ENCODE measurements at regions of chr17 and their contacts with region 1.

Region 1: DNA sequence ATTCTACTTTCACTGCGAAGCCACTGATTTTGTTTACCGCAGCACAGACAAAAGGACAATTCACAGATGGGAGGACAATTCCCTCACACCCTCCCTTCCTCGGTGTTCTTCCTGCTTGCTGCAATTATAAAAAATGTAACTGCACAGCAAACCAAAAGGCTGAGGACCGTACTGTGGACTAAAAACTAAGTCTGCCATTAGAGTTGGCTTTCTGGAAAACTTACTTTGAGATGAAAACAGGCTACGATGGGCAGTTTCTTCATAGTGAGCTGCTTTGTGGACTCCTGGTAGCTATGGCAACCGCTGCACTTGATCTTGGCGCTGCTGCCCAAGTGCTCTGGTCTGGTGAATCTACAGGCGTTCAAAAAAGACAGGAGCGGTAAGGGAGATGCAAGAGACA is 35.2 kb downstream of the USP22 start:
- DNase-seq: no peak
- ATAC-seq: no peak

Region 2: GRCh38 chr17:20989991-20990855 is 17.4 kb before region 1 on chr17:
- intact Hi-C with region 1: no loop called
- DNase-seq: no peak
- ATAC-seq: no peak

Region 3: DNA sequence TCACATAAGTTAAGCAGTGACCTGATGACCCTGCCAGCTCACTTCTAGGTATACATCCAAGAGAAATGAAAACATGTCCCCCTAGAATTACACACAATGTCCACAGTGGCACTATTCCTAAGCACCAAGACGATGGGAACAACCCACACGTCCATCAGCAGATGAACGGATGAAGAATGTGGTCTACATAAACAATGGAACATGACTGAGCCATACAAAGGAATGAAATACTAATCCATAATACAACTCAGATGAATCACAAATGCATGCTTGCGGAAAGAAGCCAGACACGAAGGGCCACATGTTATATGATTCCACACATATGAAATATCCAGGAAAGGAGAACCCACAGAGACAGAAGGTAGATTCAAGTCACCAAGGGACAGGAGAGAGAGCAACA is 17.8 kb after region 1 on chr17:
- intact Hi-C with region 1: loop called (anchors 2 kb)
- DNase-seq: no peak
- ATAC-seq: no peak

Measured in Right ventricle myocardium inferior (tissue), 1 donor.